CD4-positive, alpha-beta T cell (primary cell): ENCODE measurements at regions of chr7 and their contacts with region 1.

Region 1: GRCh38 chr7:1664711-1665548 is 5.1 kb upstream of the ELFN1 start:
- DNase-seq: peak; percentile 22 to 71 (median 48)
- ATAC-seq: peak; percentile 27
- H3K4me3 ChIP-seq: peak overlapping the region; percentile 41
- H3K4me3 Mint-ChIP-seq: peak overlapping the region; percentile 45
- H3K27ac ChIP-seq: no peak overlapping the region
- H3K27ac Mint-ChIP-seq: no peak overlapping the region
- H3K4me1 ChIP-seq: peaks cover 43% of the 10 kb centered on the region
- H3K4me1 Mint-ChIP-seq: peaks cover 13% of the 10 kb centered on the region
- H3K27me3 ChIP-seq: peaks cover 43 to 60% of the 10 kb centered on the region in 2 experiments
- H3K27me3 Mint-ChIP-seq: peaks cover 49% of the 10 kb centered on the region
- CTCF ChIP-seq: peak; percentile 46

Region 2: GRCh38 chr7:1919539-1920265 is 254.8 kb after region 1 on chr7:
- CTCF ChIA-PET with region 1: no interaction called
- POLR2A ChIA-PET with region 1: no interaction called
- intact Hi-C with region 1: loop called in 1 of 2 experiments (anchors 10 kb)
- DNase-seq: peak in 3 of 14 experiments; percentile 31 to 47 (median 42)
- ATAC-seq: peak; percentile 25
- H3K4me3 ChIP-seq: peak overlapping the region; percentile 46
- H3K4me3 Mint-ChIP-seq: peak overlapping the region; percentile 86
- H3K27ac ChIP-seq: no peak overlapping the region
- H3K27ac Mint-ChIP-seq: peak overlapping the region; percentile 92
- H3K4me1 ChIP-seq: peaks cover 80% of the 10 kb centered on the region
- H3K4me1 Mint-ChIP-seq: peaks cover 73% of the 10 kb centered on the region
- H3K27me3 ChIP-seq: no peaks in the 10 kb centered on the region
- H3K27me3 Mint-ChIP-seq: no peaks in the 10 kb centered on the region
- CTCF ChIP-seq: no peak

Region 3: GRCh38 chr7:2209146-2209960 is 544.4 kb after region 1 on chr7:
- CTCF ChIA-PET with region 1: no interaction called
- POLR2A ChIA-PET with region 1: no interaction called
- intact Hi-C with region 1: loop called (anchors 1 to 10 kb)
- DNase-seq: peak; percentile 11 to 61 (median 32)
- ATAC-seq: peak; percentile 61
- H3K4me3 ChIP-seq: no peak overlapping the region
- H3K4me3 Mint-ChIP-seq: no peak overlapping the region
- H3K27ac ChIP-seq: no peak overlapping the region
- H3K27ac Mint-ChIP-seq: no peak overlapping the region
- H3K4me1 ChIP-seq: peaks cover 2% of the 10 kb centered on the region
- H3K4me1 Mint-ChIP-seq: peaks cover under 1% of the 10 kb centered on the region
- H3K27me3 ChIP-seq: no peaks in the 10 kb centered on the region
- H3K27me3 Mint-ChIP-seq: no peaks in the 10 kb centered on the region
- CTCF ChIP-seq: peak; percentile 33